ENCODE measurements at regions of chr1 and their contacts with region 1.

Region 1: DNA sequence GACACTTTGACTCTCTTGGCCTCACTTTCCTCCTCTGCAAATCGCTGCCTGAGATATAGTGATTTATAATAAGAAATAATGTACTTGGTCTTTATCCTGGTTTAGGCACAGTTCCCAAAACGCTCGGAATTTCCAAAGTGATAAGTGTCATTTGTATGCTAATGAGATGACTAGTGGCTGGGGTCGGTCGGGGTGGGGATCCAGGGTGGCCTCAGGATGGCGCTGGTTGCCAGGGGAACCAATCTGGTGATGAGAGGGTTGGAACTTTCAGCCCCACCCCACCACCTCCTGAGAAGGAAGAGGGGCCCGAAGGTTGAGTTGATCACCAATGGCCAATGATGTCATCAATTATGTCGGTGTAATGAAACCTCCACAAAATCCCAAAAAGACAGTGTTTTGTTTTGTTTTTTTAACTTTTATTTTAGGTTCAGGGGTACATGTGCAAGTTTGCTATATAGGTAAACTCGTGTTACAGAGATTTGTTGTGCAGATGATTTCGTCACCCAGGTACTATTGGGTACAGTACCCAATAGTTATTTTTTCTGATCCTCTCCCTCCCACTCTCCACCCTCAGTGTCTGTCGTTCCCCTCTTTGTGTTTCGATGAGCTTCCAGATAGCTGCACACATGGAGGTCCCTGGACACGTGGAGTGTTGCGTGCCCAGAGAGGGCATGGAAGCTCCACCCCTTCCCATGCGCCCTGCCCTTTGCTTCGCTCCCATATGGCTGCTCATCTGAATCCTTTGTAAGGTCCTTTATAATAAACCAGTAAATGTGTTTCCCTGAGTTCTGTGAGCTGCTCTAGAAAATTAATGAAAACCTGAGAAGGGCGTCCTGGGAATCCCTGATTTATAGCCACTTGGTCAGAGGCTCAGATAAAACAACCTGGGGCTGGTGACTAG is 97.2 kb downstream of the KCNN3 start:
- DNase-seq: peak in 2 of 9 donors; percentile 19 to 36
- ATAC-seq: no peak
- H3K4me3 ChIP-seq: no peak overlapping the region
- H3K4me3 Mint-ChIP-seq: no peak overlapping the region
- H3K27ac ChIP-seq: no peak overlapping the region
- H3K27ac Mint-ChIP-seq: peak overlapping the region in 1 of 9 donors; percentile 70
- H3K4me1 ChIP-seq: no peaks in the 10 kb centered on the region
- H3K4me1 Mint-ChIP-seq: peaks cover 0 to 7% (median 0%) of the 10 kb centered on the region in 7 donors
- H3K27me3 ChIP-seq: no peaks in the 10 kb centered on the region
- H3K27me3 Mint-ChIP-seq: peaks cover 0 to 3% (median 0%) of the 10 kb centered on the region in 5 donors

Region 2: DNA sequence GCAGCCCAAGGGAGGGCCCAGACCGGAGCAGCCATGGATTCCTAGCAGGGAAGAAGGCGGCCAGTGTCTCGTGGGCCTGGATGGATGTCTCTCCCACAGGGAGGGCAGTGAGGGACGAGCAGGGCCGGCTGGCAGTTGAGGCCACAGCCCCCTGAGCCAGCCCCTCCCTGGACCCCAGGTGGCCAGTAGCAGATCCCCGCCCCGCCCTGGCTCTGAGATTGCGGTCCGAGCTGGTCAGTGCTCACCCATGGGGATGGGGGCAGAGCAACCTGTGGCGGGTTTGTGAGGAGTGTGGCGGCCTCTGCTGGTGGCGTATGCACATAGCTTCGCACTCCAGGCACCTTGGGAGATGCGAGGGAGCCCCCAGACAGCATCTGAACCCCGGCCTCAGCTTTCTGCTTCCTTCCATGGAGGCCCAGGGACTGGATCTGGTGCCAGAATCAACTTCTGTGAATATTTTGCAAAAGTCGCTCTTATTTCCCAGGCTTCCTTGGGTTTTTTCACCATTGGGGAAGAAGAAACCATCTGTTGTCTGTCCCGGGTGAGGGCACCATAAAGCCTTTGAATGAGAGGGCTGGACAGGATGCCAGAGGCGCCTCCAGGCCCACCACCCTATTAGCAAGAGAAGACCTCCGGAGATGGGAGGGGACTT is 105.6 kb after region 1 on chr1:
- CTCF ChIA-PET with region 1: interaction called, 3 read pairs
- POLR2A ChIA-PET with region 1: no interaction called
- intact Hi-C with region 1: loop called in 1 of 2 experiments (anchors 1 kb)
- DNase-seq: peak; percentile 43 to 73 (median 60)
- ATAC-seq: peak; percentile 94
- H3K4me3 ChIP-seq: no peak overlapping the region
- H3K4me3 Mint-ChIP-seq: no peak overlapping the region
- H3K27ac ChIP-seq: no peak overlapping the region
- H3K27ac Mint-ChIP-seq: peak overlapping the region in 1 of 9 donors; percentile 56
- H3K4me1 ChIP-seq: no peaks in the 10 kb centered on the region
- H3K4me1 Mint-ChIP-seq: peaks cover 0 to 8% (median 0%) of the 10 kb centered on the region in 7 donors
- H3K27me3 ChIP-seq: no peaks in the 10 kb centered on the region
- H3K27me3 Mint-ChIP-seq: peaks cover 0 to 2% (median 0%) of the 10 kb centered on the region in 5 donors